ENCODE measurements at regions of chr2 and their contacts with region 1.

Region 1: DNA sequence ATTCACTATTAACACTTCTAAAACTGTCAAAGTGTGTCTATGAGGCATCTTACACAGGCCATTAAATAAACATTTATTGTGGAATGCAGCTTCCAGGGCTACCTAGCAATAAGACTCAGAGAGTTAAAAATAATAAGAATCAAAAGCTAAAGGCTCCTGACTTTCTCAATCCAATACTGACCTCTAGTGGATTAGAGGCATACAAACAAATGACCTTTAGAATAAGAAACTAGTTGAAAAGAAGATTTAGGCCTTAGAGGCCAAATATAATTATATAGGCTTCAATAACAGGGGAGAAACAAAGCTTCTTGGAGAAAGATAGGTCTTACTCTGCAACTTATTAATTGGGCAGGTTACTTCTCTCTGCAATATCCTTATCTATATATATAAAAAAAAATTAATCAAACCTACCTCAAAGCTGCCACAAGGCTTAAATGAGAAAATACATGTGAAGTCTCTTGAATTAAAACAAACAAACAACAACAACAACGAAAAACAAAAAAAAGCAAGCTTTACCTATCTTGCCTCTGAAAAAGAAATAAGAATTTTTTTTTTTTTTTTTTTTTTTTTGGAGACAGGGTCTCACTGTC is 246.1 kb downstream of the EXOC6B start:
- DNase-seq: no peak
- ATAC-seq: peak in 3 of 4 donors; percentile 60 to 82 (median 61)
- H3K4me3 ChIP-seq: no peak overlapping the region
- H3K27ac ChIP-seq: no peak overlapping the region
- H3K4me1 ChIP-seq: no peaks in the 10 kb centered on the region
- H3K27me3 ChIP-seq: no peaks in the 10 kb centered on the region
- CTCF ChIP-seq: peak; percentile 74

Region 2: GRCh38 chr2:71545572-71546274 is 1034.0 kb before region 1 on chr2:
- intact Hi-C with region 1: loop called (anchors 5 to 10 kb)
- DNase-seq: peak in 1 of 2 donors; percentile 66
- ATAC-seq: peak; percentile 34 to 76 (median 60)
- H3K4me3 ChIP-seq: peak overlapping the region; percentile 22
- H3K27ac ChIP-seq: peak overlapping the region; percentile 55
- H3K4me1 ChIP-seq: peaks cover 5% of the 10 kb centered on the region
- H3K27me3 ChIP-seq: no peaks in the 10 kb centered on the region
- CTCF ChIP-seq: peak; percentile 61

Region 3: DNA sequence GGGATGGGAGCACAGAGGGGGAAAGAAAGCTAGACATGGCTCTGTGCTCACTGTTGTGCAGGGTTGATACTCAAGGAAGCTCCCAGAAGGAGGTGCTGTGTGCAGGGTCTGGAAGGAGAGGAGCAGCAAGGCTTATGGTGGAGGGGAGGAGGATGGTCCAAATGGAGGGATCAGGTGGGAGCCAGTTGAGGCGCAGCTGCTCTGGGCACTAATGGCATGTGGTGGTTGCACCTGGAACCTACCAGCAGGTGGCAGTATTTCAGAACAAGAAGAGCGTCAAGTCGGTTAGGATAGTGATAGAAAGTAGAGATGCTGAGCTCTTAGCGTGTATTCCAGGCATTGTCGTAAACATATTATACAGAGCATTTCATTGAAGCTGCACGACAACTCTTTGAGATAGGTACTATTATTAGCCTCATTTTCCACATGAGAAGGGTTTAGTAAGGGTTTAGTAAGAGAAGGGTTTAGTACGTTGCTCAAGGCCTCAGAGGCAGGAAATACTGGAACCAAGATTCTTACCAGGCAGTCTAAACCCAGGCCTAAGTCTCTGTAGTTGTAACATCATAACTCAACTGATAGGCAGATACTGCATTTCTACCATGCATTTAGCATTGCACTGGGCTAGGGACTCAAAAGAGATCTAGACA is 655.7 kb before region 1 on chr2:
- intact Hi-C with region 1: loop called (anchors 5 to 10 kb)
- DNase-seq: peak; percentile 53 to 71
- ATAC-seq: peak; percentile 86 to 95 (median 90)
- H3K4me3 ChIP-seq: no peak overlapping the region
- H3K27ac ChIP-seq: no peak overlapping the region
- H3K4me1 ChIP-seq: peaks cover 3% of the 10 kb centered on the region
- H3K27me3 ChIP-seq: no peaks in the 10 kb centered on the region
- CTCF ChIP-seq: peak; percentile 89

Region 4: DNA sequence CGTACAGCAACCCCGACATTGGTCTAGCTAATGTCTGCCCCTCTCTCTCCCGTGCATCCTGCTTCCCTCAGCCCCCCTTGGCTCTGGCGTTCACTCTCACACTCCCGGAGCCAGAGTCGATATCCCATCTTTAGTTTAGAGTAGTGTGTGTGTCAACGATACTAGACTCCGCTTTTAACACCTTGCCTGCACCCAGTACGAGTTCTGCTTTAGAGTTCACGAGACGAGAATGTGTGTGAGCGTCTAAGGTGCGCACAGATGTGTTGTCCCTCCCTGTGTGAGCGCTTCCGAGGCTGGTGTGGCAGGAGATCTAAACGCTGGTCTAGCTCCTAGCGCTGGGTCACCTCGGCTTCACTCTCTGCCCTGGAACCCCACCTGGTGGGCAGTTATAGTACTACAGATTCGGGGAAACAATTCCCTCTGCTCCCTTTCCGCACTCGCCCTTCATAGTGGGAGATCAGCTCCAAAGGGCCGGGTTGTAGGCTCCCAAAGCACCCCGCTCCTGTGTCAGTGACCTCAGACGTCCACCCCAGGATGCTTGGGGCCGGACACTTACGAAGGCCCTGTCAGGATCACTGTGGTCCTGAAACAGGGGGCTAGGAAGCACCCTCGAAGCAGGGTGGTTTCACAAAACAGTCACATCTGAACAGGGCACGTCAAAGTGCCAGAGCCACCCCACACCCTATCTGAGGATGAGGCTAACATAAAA is 429.4 kb before region 1 on chr2:
- intact Hi-C with region 1: loop called in 1 of 2 experiments (anchors 2 kb)
- DNase-seq: peak; percentile 66 to 83
- ATAC-seq: peak; percentile 82 to 89 (median 86)
- H3K4me3 ChIP-seq: peak overlapping the region; percentile 73
- H3K27ac ChIP-seq: no peak overlapping the region
- H3K4me1 ChIP-seq: peaks cover 37% of the 10 kb centered on the region
- H3K27me3 ChIP-seq: peaks cover 0 to 53% (median 22%) of the 10 kb centered on the region in 3 donors
- CTCF ChIP-seq: peak; percentile 88

Region 5: GRCh38 chr2:72182547-72182946 is 397.1 kb before region 1 on chr2:
- intact Hi-C with region 1: loop called in 1 of 2 experiments (anchors 10 kb)
- DNase-seq: peak; percentile 38 to 64
- ATAC-seq: no peak
- H3K4me3 ChIP-seq: no peak overlapping the region
- H3K27ac ChIP-seq: no peak overlapping the region
- H3K4me1 ChIP-seq: no peaks in the 10 kb centered on the region
- H3K27me3 ChIP-seq: no peaks in the 10 kb centered on the region
- CTCF ChIP-seq: no peak

Region 6: DNA sequence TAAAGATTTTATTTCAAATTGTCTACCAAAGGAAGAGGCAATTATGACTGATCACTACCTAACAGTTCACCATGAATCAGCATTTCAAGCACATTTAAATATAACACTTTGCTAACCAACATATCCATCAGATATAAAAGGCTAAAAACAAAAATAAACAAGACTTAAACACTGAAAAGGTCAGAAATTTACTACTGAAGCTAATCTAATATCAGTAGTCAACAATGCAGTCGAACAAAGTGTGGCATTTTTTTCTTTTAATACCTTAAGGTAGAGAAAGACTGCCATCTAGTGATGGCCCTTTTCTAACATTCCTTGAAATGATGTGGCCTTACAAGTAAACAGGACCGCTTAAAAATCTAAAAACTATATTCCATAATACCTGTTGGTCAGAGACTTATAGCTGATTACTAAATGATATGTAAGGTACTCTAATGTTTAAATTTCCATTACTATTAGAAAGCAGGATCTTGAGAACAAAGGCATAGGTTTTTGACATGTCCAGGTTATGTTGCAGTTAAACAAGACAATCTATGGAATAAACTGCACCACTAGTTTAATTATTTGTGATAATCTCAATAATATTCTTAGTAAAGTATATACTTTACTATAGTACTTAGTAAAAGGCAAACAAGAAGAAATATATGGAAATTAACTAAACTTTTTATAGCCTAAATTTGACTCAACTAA is 166.1 kb after region 1 on chr2:
- intact Hi-C with region 1: loop called in 1 of 2 experiments (anchors 10 kb)
- DNase-seq: no peak
- ATAC-seq: peak; percentile 55 to 83 (median 62)
- H3K4me3 ChIP-seq: peak overlapping the region; percentile 29
- H3K27ac ChIP-seq: no peak overlapping the region
- H3K4me1 ChIP-seq: no peaks in the 10 kb centered on the region
- H3K27me3 ChIP-seq: no peaks in the 10 kb centered on the region
- CTCF ChIP-seq: peak; percentile 82

Region 7: GRCh38 chr2:72934683-72935610 is 355.3 kb after region 1 on chr2:
- intact Hi-C with region 1: no loop called
- DNase-seq: peak; percentile 7 to 42
- ATAC-seq: peak in 1 of 4 donors; percentile 35
- H3K4me3 ChIP-seq: no peak overlapping the region
- H3K27ac ChIP-seq: no peak overlapping the region
- H3K4me1 ChIP-seq: no peaks in the 10 kb centered on the region
- H3K27me3 ChIP-seq: no peaks in the 10 kb centered on the region
- CTCF ChIP-seq: peak; percentile 22

Measured in psoas muscle (tissue), 8 donors.